BJ (cell line): ENCODE measurements at regions of chr4 and their contacts with region 1.

Region 1: DNA sequence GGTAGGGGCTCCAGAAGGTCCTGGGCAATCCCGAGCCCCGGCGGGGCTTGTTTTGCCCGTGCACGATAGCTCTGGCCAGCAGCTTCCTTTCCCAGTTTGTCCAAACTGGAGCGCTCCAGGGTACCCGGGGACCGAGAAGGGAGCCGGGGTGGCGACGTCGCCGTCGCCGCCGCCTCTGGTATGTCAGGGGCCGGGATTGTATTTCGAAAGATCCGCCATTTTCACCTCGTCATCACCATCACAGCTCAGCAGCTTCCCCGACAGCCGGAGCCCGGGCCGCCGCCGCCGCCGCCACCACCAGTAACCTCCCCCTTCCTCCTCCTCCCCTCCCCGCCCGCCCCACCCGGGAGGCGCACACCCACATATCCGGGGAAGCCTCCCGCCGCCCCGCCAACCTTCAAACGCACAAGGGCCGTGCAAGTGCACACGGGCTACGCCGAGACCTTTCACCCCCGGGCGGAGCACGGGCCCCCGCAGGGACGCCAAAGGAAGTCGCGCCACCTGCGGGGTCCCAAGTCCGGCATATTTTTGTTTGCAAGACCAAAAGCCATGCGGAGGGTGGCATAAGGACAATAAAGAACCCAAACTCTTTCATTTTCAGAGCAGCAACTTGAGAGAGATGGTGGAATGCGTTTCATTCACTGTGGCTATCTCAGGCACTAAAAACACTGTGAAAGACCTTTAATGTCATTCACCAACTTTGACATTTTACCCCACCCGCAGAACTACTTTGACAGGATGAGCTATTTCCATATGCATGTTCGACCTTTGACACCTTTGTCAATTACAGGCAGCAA is at the start of gene LIN54:
- DNase-seq: no peak
- H3K4me3 ChIP-seq: peak within 1 kb of the TSS; percentile 69
- H3K27me3 ChIP-seq: no peaks in the 10 kb centered on the region
- CTCF ChIP-seq: no peak
- polyA plus RNA-seq, gene LIN54: 14.7 and 18.8 TPM in 2 replicates

Region 2: GRCh38 chr4:82798168-82799005 is 212.3 kb before region 1 on chr4 and contains the start of gene SCD5:
- CTCF ChIA-PET with region 1: no interaction called
- POLR2A ChIA-PET with region 1: interaction called, 15 read pairs
- DNase-seq: peak; percentile 20
- H3K4me3 ChIP-seq: peak within 1 kb of the TSS; percentile 85
- H3K27me3 ChIP-seq: no peaks in the 10 kb centered on the region
- CTCF ChIP-seq: peak; percentile 21; the same call in 1 of the 2 replicates
- polyA plus RNA-seq, gene SCD5: 32.5 and 34.6 TPM in 2 replicates

Region 3: DNA sequence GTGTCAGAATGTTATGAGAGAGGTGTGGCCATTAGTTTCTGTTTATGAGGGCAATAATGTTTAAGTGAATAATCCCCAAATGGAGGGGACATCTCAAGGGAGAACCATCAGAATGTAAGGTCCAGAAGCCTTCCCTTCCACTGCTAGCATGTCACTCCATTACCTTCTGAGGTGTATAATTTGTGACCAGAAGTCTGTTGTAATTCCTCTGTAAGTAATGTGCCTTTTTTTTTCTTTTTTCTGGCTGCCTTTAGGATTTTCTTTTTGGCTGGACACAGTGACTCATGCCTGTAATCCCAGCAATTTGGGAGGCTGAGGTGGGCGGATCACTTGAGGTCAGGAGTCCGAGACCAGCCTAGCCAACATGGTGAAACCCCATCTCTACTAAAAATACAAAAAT is 13.5 kb after region 1 on chr4:
- CTCF ChIA-PET with region 1: interaction called, 3 read pairs
- POLR2A ChIA-PET with region 1: interaction called, 21 read pairs
- DNase-seq: no peak
- H3K4me3 ChIP-seq: no peak overlapping the region
- H3K27me3 ChIP-seq: no peaks in the 10 kb centered on the region
- CTCF ChIP-seq: no peak

Region 4: GRCh38 chr4:83034630-83035494 is 24.1 kb after region 1 on chr4 and contains the start of gene COPS4:
- CTCF ChIA-PET with region 1: interaction called, 4 read pairs
- POLR2A ChIA-PET with region 1: interaction called, 11 read pairs
- DNase-seq: peak; percentile 99
- H3K4me3 ChIP-seq: peak within 1 kb of the TSS; percentile 73
- H3K27me3 ChIP-seq: peaks cover 3% of the 10 kb centered on the region; the same call in 1 of the 2 replicates
- CTCF ChIP-seq: peak; percentile 64
- polyA plus RNA-seq, gene COPS4: 70.2 and 87.7 TPM in 2 replicates

Region 5: GRCh38 chr4:83334425-83335241 is 323.9 kb after region 1 on chr4 and contains the start of gene HPSE:
- CTCF ChIA-PET with region 1: no interaction called
- POLR2A ChIA-PET with region 1: no interaction called
- DNase-seq: peak; percentile 9
- H3K4me3 ChIP-seq: peak within 1 kb of the TSS; percentile 53
- H3K27me3 ChIP-seq: peaks cover 6% of the 10 kb centered on the region
- CTCF ChIP-seq: no peak
- polyA plus RNA-seq, gene HPSE: 0.71 and 1.1 TPM in 2 replicates

Region 6: DNA sequence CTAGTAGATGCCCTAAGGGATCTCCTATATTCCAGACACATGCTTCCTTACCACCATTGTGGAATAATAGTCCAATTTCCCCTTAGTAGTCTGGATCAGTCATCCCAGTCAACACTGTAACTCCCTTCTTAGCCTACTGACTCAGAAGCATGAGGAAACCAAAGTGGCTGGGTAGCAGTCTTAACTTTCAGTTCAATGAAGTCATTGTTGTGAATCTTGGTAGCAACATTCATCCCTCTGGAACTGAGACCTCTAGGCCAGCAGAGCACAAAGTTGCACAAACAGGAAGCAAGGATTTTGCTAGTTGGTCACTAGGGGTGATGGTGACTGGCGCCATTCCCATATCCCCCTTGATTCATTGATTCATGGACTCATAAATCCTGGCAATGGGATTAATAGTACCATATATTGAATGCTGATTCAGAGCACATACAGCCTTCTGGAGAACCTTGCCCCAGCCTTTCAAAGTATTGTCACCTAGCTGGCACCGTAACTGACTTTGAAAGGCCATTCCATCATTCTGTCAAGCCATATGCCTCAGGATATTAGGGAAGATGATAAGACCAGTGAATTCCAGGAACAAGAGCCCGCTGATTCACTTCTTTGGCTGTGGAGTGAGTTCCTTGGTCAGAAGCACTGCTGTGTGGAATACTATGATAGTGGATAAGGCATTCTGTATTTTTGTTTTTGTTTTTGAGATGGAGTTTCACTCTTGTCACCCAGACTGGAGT is 505.5 kb after region 1 on chr4:
- CTCF ChIA-PET with region 1: no interaction called
- POLR2A ChIA-PET with region 1: interaction called, 15 read pairs
- DNase-seq: peak; percentile 35
- H3K4me3 ChIP-seq: no peak overlapping the region
- H3K27me3 ChIP-seq: no peaks in the 10 kb centered on the region
- CTCF ChIP-seq: no peak